ENCODE measurements at regions of chr14 and their contacts with region 1.

Region 1: DNA sequence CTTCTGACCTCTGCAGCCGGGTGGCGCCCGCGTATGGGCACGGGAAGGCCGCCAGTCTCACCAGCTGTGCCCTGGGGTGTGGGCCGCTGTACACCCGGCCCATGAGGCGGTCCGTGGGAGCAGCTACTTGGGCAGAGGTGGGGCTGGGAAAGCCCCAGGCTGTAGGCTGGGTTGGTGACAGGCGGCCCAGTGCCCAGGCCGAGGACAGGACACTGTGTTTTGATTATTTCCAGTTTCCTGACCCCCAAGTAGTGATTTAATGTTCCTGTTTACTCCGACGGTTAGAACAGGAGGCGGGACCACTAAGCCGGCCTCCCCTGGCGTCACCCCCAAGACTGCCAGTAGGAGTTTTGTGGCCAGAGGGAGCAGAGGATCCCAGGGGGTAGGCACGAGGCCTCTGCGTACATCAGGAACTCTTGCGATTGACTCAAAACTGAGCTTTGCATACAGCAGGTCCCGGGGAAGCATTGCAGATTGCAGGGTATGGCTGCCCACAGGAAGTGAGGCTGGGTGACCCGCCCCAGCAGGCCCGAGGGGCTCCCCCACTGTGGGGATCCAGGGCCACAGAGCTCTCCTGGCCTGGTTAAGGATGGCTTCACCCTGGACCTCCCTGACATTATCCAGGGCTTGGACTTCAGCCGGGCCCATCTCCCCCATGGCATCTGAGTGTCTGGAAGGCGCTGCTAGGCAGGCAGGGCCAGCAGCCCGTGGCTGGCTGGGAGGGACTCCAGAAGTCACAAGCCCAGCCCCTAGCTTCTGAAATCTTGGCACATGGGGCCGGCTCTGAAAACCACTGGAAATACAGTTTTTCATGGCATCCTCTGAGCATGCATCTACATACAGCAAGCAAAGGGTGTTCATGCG is 42.5 kb upstream of the DIO3 start:
- DNase-seq: peak; percentile 41
- H3K4me3 ChIP-seq: no peak overlapping the region
- H3K27ac ChIP-seq: peak overlapping the region in 3 of 4 donors; percentile 6 to 25 (median 16)
- H3K4me1 ChIP-seq: peaks cover 0 to 11% (median 0%) of the 10 kb centered on the region in 4 donors
- H3K27me3 ChIP-seq: no peaks in the 10 kb centered on the region
- CTCF ChIP-seq: peak in 2 of 5 experiments; percentile 18 to 40
- EP300 ChIP-seq: no peak
- POLR2A ChIP-seq: no peak

Region 2: GRCh38 chr14:101256266-101256665 is 262.6 kb before region 1 on chr14:
- in situ Hi-C with region 1: no loop called
- intact Hi-C with region 1: no loop called
- DNase-seq: no peak
- H3K4me3 ChIP-seq: no peak overlapping the region
- H3K27ac ChIP-seq: no peak overlapping the region
- H3K4me1 ChIP-seq: no peaks in the 10 kb centered on the region
- H3K27me3 ChIP-seq: no peaks in the 10 kb centered on the region
- CTCF ChIP-seq: no peak
- EP300 ChIP-seq: no peak
- POLR2A ChIP-seq: no peak

Region 3: GRCh38 chr14:102344485-102344884 is 825.6 kb after region 1 on chr14:
- in situ Hi-C with region 1: no loop called
- intact Hi-C with region 1: loop called (anchors 5 kb)
- DNase-seq: no peak
- H3K4me3 ChIP-seq: no peak overlapping the region
- H3K27ac ChIP-seq: no peak overlapping the region
- H3K4me1 ChIP-seq: no peaks in the 10 kb centered on the region
- H3K27me3 ChIP-seq: no peaks in the 10 kb centered on the region
- CTCF ChIP-seq: no peak
- EP300 ChIP-seq: no peak
- POLR2A ChIP-seq: no peak

Measured in transverse colon (tissue), 4 donors.